Heart left ventricle (tissue), 16 donors: ENCODE measurements at regions of chr17 and their contacts with region 1.

Region 1: DNA sequence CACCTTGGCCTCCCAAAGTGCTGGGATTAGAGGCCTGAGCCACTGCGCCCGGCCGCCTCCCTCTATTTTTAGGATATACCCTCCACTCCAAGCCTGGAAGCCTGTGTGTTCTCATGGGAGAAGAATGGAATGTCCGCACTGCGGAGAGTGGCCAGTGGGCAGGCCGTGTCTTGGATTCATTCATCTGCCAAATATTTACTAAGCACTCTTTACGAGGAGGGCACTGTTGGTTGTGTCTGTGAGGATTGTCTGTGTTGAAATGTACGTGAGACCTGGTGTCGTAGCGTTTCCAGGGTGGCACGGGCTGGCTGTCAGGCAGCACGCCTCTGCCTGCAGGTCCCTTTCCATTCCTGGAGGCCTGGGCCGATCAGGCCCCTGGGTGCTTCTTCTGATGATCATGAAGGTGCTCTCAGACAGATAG is 19.2 kb downstream of the PGS1 start:
- DNase-seq: peak in 4 of 5 donors; percentile 62 to 83 (median 76)
- ATAC-seq: peak; percentile 93 to 94 (median 94)
- H3K4me3 ChIP-seq: no peak overlapping the region
- H3K27ac ChIP-seq: peak overlapping the region; percentile 38 to 91 (median 87)
- H3K4me1 ChIP-seq: peaks cover 16 to 59% (median 44%) of the 10 kb centered on the region in 12 donors
- H3K27me3 ChIP-seq: no peaks in the 10 kb centered on the region
- CTCF ChIP-seq: no peak
- POLR2A ChIP-seq: no peak

Region 2: GRCh38 chr17:78378225-78379130 is 19.2 kb before region 1 on chr17 and contains the start of gene PGS1:
- intact Hi-C with region 1: loop called in 1 of 10 experiments (anchors 2 kb)
- DNase-seq: peak; percentile 82 to 94 (median 86)
- ATAC-seq: peak; percentile 23 to 92 (median 83)
- H3K4me3 ChIP-seq: peak within 1 kb of the TSS; percentile 68 to 99 (median 94)
- H3K27ac ChIP-seq: peak within 1 kb of the TSS; percentile 66 to 98 (median 86)
- H3K4me1 ChIP-seq: peaks cover 7 to 94% (median 45%) of the 10 kb centered on the region in 12 donors
- H3K27me3 ChIP-seq: no peaks in the 10 kb centered on the region
- CTCF ChIP-seq: no peak
- POLR2A ChIP-seq: peak in 1 of 2 donors; percentile 83
- total RNA-seq, gene PGS1: 14.2 to 32.8 (median 17.3) TPM